Gastrocnemius medialis (tissue), 4 donors: ENCODE measurements at regions of chr15 and their contacts with region 1.

Region 1: GRCh38 chr15:98530570-98530969 is 117.8 kb upstream of the IGF1R start:
- DNase-seq: no peak
- ATAC-seq: no peak
- H3K4me3 ChIP-seq: no peak overlapping the region
- H3K27ac ChIP-seq: no peak overlapping the region
- H3K4me1 ChIP-seq: no peaks in the 10 kb centered on the region
- H3K27me3 ChIP-seq: peaks cover 13 to 15% (median 13%) of the 10 kb centered on the region in 3 donors
- CTCF ChIP-seq: no peak
- POLR2A ChIP-seq: no peak

Region 2: GRCh38 chr15:98401029-98401428 is 129.5 kb before region 1 on chr15:
- in situ Hi-C with region 1: no loop called
- intact Hi-C with region 1: no loop called
- DNase-seq: peak; percentile 52 to 74
- ATAC-seq: peak; percentile 85 to 90
- H3K4me3 ChIP-seq: no peak overlapping the region
- H3K27ac ChIP-seq: peak overlapping the region in 2 of 4 donors; percentile 31 to 55
- H3K4me1 ChIP-seq: no peaks in the 10 kb centered on the region
- H3K27me3 ChIP-seq: no peaks in the 10 kb centered on the region
- CTCF ChIP-seq: no peak
- POLR2A ChIP-seq: no peak

Region 3: DNA sequence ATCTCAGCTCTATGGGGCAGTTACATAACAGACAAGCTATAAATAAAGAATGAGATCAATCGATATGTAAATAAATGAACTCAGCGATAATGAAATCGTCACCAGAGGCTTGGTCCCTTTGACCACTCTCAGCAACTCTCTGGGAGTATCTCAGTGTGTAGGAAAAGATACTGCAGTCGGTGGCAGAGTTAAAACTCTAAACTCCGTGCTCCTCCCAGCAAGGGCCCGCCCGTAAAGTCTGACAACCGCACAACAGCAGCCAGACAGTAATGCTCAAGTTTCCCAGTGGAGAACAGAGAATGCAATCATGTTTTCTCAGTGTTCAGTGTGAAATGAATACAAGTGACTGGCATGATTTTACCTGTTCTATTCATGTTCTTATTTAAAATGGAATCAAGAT is 89.5 kb after region 1 on chr15:
- in situ Hi-C with region 1: loop called in 1 of 4 experiments (anchors 10 kb)
- intact Hi-C with region 1: no loop called
- DNase-seq: no peak
- ATAC-seq: no peak
- H3K4me3 ChIP-seq: no peak overlapping the region
- H3K27ac ChIP-seq: no peak overlapping the region
- H3K4me1 ChIP-seq: no peaks in the 10 kb centered on the region
- H3K27me3 ChIP-seq: peaks cover 48 to 61% (median 56%) of the 10 kb centered on the region in 3 donors
- CTCF ChIP-seq: no peak
- POLR2A ChIP-seq: no peak